ENCODE measurements at regions of chr10 and their contacts with region 1.

Region 1: DNA sequence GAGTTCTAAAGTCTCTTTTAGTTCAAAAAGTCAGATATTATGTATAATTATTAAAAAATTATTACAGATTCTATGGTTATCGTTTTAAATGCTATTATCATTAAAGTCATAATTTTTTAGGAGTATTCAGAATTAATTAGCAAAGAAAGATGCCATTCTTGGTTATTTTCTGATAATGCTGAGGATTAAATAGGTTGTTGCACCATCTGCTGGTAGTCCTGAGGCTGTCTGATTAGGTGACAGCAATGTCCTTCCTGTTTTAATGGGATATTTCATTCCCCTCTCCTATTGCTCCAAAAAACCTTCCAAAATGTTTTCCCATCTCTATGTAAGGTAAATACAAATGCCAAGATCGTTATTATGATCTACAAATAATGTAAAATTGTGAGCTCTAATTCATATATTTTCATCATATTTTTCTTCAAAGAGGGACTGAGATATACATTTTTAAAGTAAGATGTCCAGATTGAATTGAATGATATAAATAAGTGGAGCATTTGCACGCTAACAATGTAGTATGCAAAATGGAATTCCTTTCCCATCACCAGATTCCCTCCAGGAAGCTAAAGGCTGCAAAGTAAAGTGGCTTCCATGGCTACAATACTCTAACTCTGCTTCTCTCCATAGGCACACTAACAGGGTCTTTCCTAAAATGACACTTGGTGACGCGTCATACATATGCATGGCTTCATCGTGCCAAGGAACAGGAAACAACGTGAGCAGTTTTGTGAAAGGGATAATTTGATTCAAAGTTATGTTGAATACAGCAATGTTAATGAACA is 58.8 kb upstream of the AKR1E2 start:
- DNase-seq: no peak
- H3K4me3 ChIP-seq: no peak overlapping the region
- H3K27ac ChIP-seq: peak overlapping the region in 2 of 4 donors; percentile 1 to 58
- H3K4me1 ChIP-seq: peaks cover 0 to 40% (median 28%) of the 10 kb centered on the region in 4 donors
- H3K27me3 ChIP-seq: no peaks in the 10 kb centered on the region
- CTCF ChIP-seq: peak; percentile 47 to 79 (median 64)
- EP300 ChIP-seq: no peak
- POLR2A ChIP-seq: no peak

Region 2: DNA sequence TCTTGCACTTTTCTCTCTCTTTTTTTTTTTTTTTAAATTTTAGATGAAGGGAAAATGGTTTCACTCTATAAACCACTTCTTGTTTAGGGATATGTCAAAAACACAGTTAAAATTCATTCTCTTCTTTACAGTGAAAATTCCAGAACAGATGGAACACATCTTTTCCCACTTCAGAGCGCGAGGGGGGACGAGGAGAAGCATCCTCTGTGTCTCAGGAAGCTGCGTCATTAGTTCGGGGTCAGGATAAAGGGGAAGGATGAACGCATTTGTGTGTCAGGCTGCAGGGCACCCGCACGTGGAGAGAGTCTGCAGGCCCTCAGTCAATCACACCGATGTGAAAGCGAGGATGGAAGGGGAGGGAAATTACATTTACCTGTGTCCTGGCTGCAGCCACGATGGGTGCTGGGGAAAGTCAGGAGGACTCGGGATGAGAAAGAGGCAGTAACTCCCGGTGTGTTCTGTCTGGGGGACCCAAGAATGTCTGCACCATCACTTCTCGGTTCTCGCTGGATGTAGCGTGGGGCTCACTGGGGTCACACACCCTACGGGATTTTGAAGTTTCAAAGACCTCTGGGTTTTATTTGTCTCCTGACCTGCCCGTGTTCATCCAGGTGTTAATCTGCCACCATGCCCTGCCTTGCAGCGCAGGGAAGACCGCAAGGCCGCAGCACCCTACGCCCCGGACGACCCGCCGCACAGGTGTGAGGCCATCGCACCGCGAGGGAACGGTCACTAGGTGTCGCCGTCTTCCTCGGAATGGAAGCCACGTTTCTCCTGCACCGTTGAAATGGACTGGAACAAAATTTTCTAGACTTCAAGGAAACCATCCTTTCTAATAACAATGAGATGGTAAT is 1527.9 kb before region 1 on chr10:
- intact Hi-C with region 1: loop called (anchors 2 kb)
- DNase-seq: peak; percentile 86
- H3K4me3 ChIP-seq: no peak overlapping the region
- H3K27ac ChIP-seq: peak overlapping the region in 3 of 4 donors; percentile 2 to 52 (median 38)
- H3K4me1 ChIP-seq: peaks cover 0 to 17% (median 3%) of the 10 kb centered on the region in 4 donors
- H3K27me3 ChIP-seq: no peaks in the 10 kb centered on the region
- CTCF ChIP-seq: peak; percentile 81 to 93 (median 90)
- EP300 ChIP-seq: no peak
- POLR2A ChIP-seq: no peak

Region 3: GRCh38 chr10:4307910-4308309 is 459.3 kb before region 1 on chr10:
- intact Hi-C with region 1: no loop called
- DNase-seq: no peak
- H3K4me3 ChIP-seq: no peak overlapping the region
- H3K27ac ChIP-seq: no peak overlapping the region
- H3K4me1 ChIP-seq: peaks cover 0 to 7% (median 2%) of the 10 kb centered on the region in 4 donors
- H3K27me3 ChIP-seq: no peaks in the 10 kb centered on the region
- CTCF ChIP-seq: no peak
- EP300 ChIP-seq: no peak
- POLR2A ChIP-seq: no peak

Region 4: DNA sequence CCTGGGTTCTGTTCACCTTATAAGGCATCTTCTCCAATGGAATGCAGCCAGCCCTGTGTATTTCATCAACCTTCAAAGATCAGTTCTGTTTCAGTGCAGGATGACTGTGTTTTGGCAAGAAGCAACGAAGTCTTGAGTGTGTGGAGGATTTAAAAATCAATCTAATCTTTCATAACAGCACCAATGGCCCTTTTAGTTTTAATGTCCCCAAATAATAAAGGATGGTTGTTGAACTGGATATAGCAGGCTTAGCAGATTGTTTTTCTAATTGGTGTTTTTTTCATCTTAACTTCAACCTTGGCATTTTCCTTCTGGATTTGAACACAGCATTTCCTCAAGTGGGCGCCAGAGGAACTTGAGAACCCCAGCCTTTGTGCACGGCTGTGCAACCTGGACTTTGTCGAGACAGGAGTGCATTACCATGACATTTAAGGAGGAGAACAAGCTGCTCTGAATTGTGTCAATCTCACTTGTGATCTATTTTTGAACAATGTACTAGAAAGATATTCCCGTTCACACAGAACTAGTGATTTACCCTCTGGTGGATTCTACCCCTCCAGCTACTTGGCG is 254.5 kb before region 1 on chr10:
- intact Hi-C with region 1: loop called (anchors 5 kb)
- DNase-seq: peak; percentile 73
- H3K4me3 ChIP-seq: no peak overlapping the region
- H3K27ac ChIP-seq: peak overlapping the region in 2 of 4 donors; percentile 37 to 58
- H3K4me1 ChIP-seq: peaks cover 0 to 17% (median 7%) of the 10 kb centered on the region in 4 donors
- H3K27me3 ChIP-seq: no peaks in the 10 kb centered on the region
- CTCF ChIP-seq: peak in 3 of 4 experiments; percentile 46 to 55 (median 54)
- EP300 ChIP-seq: no peak
- POLR2A ChIP-seq: no peak

Measured in sigmoid colon (tissue), 7 donors.